GM12878 (cell line): ENCODE measurements at regions of chr3 and their contacts with region 1.

Region 1: DNA sequence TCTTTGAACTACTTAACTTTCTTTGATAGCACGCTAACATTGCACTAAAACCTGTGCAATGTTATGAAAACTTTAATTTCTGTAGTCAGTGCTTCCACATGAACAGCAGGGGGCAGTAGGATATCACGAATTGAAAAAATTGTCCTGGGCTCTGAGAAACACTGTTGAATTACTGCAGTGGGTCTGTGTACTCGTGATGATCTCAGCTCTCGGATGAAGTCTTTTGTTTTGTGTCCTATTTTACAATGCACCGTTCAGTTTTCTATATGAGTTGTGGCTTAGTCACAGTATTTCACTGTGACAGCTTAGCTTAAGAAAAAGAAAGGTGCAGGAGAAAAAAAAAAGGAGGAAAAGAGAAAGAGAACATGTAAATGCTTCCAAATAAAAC is 141.3 kb upstream of the CCDC54 start:
- DNase-seq: peak; percentile 31
- ATAC-seq: peak; percentile 70
- H3K4me3 ChIP-seq: no peak overlapping the region
- H3K27ac ChIP-seq: no peak overlapping the region
- H3K4me1 ChIP-seq: no peaks in the 10 kb centered on the region; the same call in 1 of the 2 replicates
- H3K27me3 ChIP-seq: no peaks in the 10 kb centered on the region
- CTCF ChIP-seq: peak; percentile 69 to 90 (median 84)
- EP300 ChIP-seq: no peak
- POLR2A ChIP-seq: no peak
- RAD21 ChIP-seq: peak; percentile 98

Region 2: DNA sequence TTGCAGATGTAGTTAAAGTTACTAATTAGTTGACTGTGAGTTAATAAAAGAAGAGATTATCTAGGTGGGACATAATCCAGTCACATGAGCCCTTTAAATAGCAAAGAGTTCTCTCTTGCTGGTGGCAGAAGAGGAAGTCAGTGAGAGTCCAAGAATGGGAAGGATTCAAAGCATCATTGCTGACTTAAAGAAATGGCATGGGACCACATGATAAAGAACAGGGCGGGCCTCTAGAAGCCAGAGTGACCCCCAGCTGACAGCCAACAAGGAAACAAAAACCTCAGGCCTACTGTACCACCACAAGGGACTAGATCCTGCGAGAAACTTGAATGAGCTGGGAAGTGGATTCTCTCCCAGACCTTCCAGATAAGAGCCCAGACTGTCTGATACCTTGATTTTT is 305.8 kb before region 1 on chr3:
- CTCF ChIA-PET with region 1: no interaction called
- POLR2A ChIA-PET with region 1: no interaction called
- RAD21 ChIA-PET with region 1: no interaction called
- SMC1A ChIA-PET with region 1: no interaction called
- in situ Hi-C with region 1: no loop called
- intact Hi-C with region 1: no loop called
- DNase-seq: no peak
- ATAC-seq: no peak
- H3K4me3 ChIP-seq: no peak overlapping the region
- H3K27ac ChIP-seq: no peak overlapping the region
- H3K4me1 ChIP-seq: no peaks in the 10 kb centered on the region
- H3K27me3 ChIP-seq: no peaks in the 10 kb centered on the region
- CTCF ChIP-seq: no peak
- EP300 ChIP-seq: no peak
- POLR2A ChIP-seq: no peak
- RAD21 ChIP-seq: no peak

Region 3: GRCh38 chr3:107184375-107184774 is 51.5 kb before region 1 on chr3:
- CTCF ChIA-PET with region 1: no interaction called
- POLR2A ChIA-PET with region 1: no interaction called
- RAD21 ChIA-PET with region 1: no interaction called
- SMC1A ChIA-PET with region 1: no interaction called
- in situ Hi-C with region 1: no loop called
- intact Hi-C with region 1: no loop called
- DNase-seq: no peak
- ATAC-seq: no peak
- H3K4me3 ChIP-seq: no peak overlapping the region
- H3K27ac ChIP-seq: no peak overlapping the region
- H3K4me1 ChIP-seq: no peaks in the 10 kb centered on the region
- H3K27me3 ChIP-seq: no peaks in the 10 kb centered on the region; a peak in 1 of 4 replicates
- CTCF ChIP-seq: no peak
- EP300 ChIP-seq: no peak
- POLR2A ChIP-seq: no peak
- RAD21 ChIP-seq: no peak

Region 4: GRCh38 chr3:107218864-107219269 is 17.1 kb before region 1 on chr3:
- CTCF ChIA-PET with region 1: interaction called, 11 read pairs
- POLR2A ChIA-PET with region 1: no interaction called
- RAD21 ChIA-PET with region 1: no interaction called
- SMC1A ChIA-PET with region 1: interaction called, 5 read pairs
- in situ Hi-C with region 1: no loop called
- intact Hi-C with region 1: no loop called
- DNase-seq: no peak
- ATAC-seq: no peak
- H3K4me3 ChIP-seq: no peak overlapping the region
- H3K27ac ChIP-seq: no peak overlapping the region
- H3K4me1 ChIP-seq: no peaks in the 10 kb centered on the region
- H3K27me3 ChIP-seq: peaks cover 0 to 5% of the 10 kb centered on the region in 2 experiments; a peak in 1 of 4 replicates
- CTCF ChIP-seq: no peak
- EP300 ChIP-seq: no peak
- POLR2A ChIP-seq: no peak
- RAD21 ChIP-seq: no peak

Region 5: GRCh38 chr3:107345822-107346405 is 110.0 kb after region 1 on chr3:
- CTCF ChIA-PET with region 1: no interaction called
- POLR2A ChIA-PET with region 1: no interaction called
- RAD21 ChIA-PET with region 1: no interaction called
- SMC1A ChIA-PET with region 1: no interaction called
- in situ Hi-C with region 1: no loop called
- intact Hi-C with region 1: no loop called
- DNase-seq: no peak
- ATAC-seq: no peak
- H3K4me3 ChIP-seq: no peak overlapping the region
- H3K27ac ChIP-seq: no peak overlapping the region
- H3K4me1 ChIP-seq: no peaks in the 10 kb centered on the region
- H3K27me3 ChIP-seq: no peaks in the 10 kb centered on the region
- CTCF ChIP-seq: no peak
- EP300 ChIP-seq: no peak
- POLR2A ChIP-seq: no peak
- RAD21 ChIP-seq: no peak

Region 6: DNA sequence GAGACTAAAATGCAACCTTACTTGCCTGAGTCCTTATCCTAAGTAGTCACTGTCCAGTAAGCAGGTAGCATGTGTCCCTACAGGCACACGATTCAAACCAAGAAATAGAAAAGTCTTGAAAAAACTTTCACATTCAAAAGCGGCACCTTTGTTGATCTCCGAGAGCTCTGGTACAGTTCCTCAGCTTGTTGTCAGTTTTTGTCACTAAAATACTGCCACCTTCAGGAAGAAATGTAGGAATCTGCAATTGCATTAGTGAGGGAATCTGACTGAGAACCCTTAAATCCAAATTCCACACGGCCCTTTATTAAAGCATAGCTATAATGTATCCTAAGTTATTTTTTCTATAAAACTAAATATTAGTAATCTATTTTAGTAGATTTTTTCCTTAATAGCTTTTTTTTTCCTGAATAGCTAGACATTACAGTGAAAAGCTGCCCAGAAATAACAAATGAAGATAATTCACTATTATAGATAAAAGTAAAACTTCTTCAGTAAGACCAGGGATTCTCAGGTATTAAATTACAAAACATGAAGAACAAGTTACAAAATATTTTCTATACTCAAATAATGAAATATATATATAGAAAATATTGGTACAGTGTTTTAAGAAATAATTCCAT is 185.4 kb after region 1 on chr3:
- CTCF ChIA-PET with region 1: interaction called, 40 read pairs
- POLR2A ChIA-PET with region 1: no interaction called
- RAD21 ChIA-PET with region 1: interaction called, 11 read pairs
- SMC1A ChIA-PET with region 1: interaction called, 17 read pairs
- in situ Hi-C with region 1: loop called (anchors 5 kb)
- intact Hi-C with region 1: loop called (anchors 1 kb)
- DNase-seq: no peak
- ATAC-seq: peak; percentile 86
- H3K4me3 ChIP-seq: no peak overlapping the region
- H3K27ac ChIP-seq: no peak overlapping the region
- H3K4me1 ChIP-seq: no peaks in the 10 kb centered on the region
- H3K27me3 ChIP-seq: no peaks in the 10 kb centered on the region
- CTCF ChIP-seq: peak; percentile 50 to 59 (median 57); a peak in 5 of 6 replicates
- EP300 ChIP-seq: no peak
- POLR2A ChIP-seq: no peak
- RAD21 ChIP-seq: peak; percentile 58

Region 7: GRCh38 chr3:107522510-107523288 is 286.8 kb after region 1 on chr3 and contains the start of gene BBX:
- CTCF ChIA-PET with region 1: no interaction called
- POLR2A ChIA-PET with region 1: no interaction called
- RAD21 ChIA-PET with region 1: no interaction called
- SMC1A ChIA-PET with region 1: no interaction called
- in situ Hi-C with region 1: no loop called
- intact Hi-C with region 1: loop called (anchors 10 kb)
- DNase-seq: peak; percentile 97
- ATAC-seq: peak; percentile 89
- H3K4me3 ChIP-seq: peak within 1 kb of the TSS; percentile 85
- H3K27ac ChIP-seq: peak within 1 kb of the TSS; percentile 84
- H3K4me1 ChIP-seq: peaks cover 10% of the 10 kb centered on the region; the same call in 1 of the 2 replicates
- H3K27me3 ChIP-seq: no peaks in the 10 kb centered on the region
- CTCF ChIP-seq: no peak
- EP300 ChIP-seq: no peak
- POLR2A ChIP-seq: peak; percentile 75
- RAD21 ChIP-seq: no peak
- polyA plus RNA-seq, gene BBX: 17.5 to 37.3 TPM

Region 8: GRCh38 chr3:107740992-107741896 is 505.3 kb after region 1 on chr3:
- CTCF ChIA-PET with region 1: no interaction called
- POLR2A ChIA-PET with region 1: no interaction called
- RAD21 ChIA-PET with region 1: no interaction called
- SMC1A ChIA-PET with region 1: interaction called, 3 read pairs
- in situ Hi-C with region 1: no loop called
- intact Hi-C with region 1: loop called (anchors 2 kb)
- DNase-seq: no peak
- ATAC-seq: no peak
- H3K4me3 ChIP-seq: no peak overlapping the region
- H3K27ac ChIP-seq: no peak overlapping the region
- H3K4me1 ChIP-seq: no peaks in the 10 kb centered on the region
- H3K27me3 ChIP-seq: no peaks in the 10 kb centered on the region
- CTCF ChIP-seq: peak in 2 of 3 experiments; percentile 21 to 36; a peak in 3 of 6 replicates
- EP300 ChIP-seq: no peak
- POLR2A ChIP-seq: no peak
- RAD21 ChIP-seq: peak; percentile 67

Region 9: DNA sequence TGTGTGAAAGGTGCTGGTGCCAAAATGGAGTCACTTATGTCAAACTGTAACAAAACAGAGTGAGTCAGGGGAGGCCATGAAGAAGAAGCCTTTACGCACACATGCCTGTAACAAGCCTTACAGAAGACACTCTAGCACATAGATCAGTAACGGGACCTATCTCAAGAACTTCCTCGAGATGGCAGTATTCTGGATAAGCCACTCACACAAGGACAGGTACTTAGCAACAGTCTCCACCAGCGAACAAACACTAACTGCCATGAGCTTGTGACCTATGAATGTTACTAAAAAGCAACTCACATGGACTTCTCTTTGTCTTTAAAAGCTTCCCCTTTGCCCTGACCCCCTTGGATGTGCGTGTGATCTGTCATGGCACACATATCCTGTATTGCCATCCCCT is 619.8 kb after region 1 on chr3:
- CTCF ChIA-PET with region 1: no interaction called
- POLR2A ChIA-PET with region 1: no interaction called
- RAD21 ChIA-PET with region 1: no interaction called
- SMC1A ChIA-PET with region 1: no interaction called
- in situ Hi-C with region 1: no loop called
- intact Hi-C with region 1: loop called (anchors 10 kb)
- DNase-seq: no peak
- ATAC-seq: peak; percentile 97
- H3K4me3 ChIP-seq: no peak overlapping the region
- H3K27ac ChIP-seq: no peak overlapping the region
- H3K4me1 ChIP-seq: no peaks in the 10 kb centered on the region; the same call in 1 of the 2 replicates
- H3K27me3 ChIP-seq: no peaks in the 10 kb centered on the region
- CTCF ChIP-seq: peak; percentile 37 to 46 (median 41); a peak in 3 of 6 replicates
- EP300 ChIP-seq: no peak
- POLR2A ChIP-seq: no peak
- RAD21 ChIP-seq: 0 out of 2 replicates have a peak, but pooled peaks have one; percentile 18

Region 10: GRCh38 chr3:108477511-108478147 is 1241.7 kb after region 1 on chr3:
- CTCF ChIA-PET with region 1: interaction called, 17 read pairs
- POLR2A ChIA-PET with region 1: no interaction called
- RAD21 ChIA-PET with region 1: no interaction called
- SMC1A ChIA-PET with region 1: interaction called, 6 read pairs
- in situ Hi-C with region 1: loop called (anchors 10 kb)
- intact Hi-C with region 1: loop called (anchors 10 kb)
- DNase-seq: peak; percentile 12
- ATAC-seq: peak; percentile 89
- H3K4me3 ChIP-seq: no peak overlapping the region
- H3K27ac ChIP-seq: no peak overlapping the region
- H3K4me1 ChIP-seq: no peaks in the 10 kb centered on the region
- H3K27me3 ChIP-seq: no peaks in the 10 kb centered on the region
- CTCF ChIP-seq: peak; percentile 66 to 70 (median 69)
- EP300 ChIP-seq: no peak
- POLR2A ChIP-seq: no peak
- RAD21 ChIP-seq: peak; percentile 86